ENCODE measurements at regions of chr1 and their contacts with region 1.

Region 1: DNA sequence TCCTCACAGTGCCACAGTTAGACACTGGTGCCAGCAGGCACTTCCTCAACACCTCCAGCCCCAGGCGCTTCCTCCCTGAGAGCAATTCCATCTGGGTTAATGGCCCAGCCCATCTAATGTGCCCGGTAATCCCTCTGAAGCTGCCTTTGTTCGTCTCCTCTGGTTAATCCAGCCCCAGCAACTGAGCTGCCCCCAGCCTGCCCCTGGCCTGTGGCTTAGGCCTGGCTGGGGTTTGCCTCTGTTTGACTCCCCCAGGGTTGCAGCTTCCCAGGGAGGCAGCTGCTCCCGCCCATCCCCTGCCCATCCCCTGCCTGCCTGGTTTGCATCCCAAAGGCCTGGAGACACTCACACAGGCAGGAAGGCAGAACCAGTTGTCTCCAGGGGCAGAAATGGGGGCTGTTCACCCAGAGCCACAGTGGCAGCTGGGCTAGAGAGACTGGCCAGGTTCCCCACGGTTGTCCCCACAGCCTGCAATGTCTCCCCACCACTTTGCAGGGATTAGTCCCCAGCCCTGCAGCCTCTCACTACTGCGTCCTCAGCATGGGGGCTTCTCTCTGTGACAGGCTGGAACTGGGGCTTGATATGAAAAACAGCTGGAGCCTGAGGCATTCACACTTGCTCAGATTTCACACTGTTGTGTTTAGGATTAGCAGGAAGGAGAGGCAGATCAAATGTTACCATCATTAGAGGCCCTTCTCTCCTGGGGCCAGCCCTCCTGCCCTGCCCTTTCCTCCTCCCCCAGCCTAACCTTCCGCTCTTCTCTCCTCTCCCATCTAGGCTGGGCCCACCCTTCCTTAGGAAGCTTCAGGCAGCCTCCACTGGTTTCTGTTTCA is 120.2 kb downstream of the TLR5 start:
- DNase-seq: no peak
- H3K4me3 ChIP-seq: peak overlapping the region in 3 of 4 experiments; percentile 5 to 47 (median 12); a peak in 4 of 8 replicates
- H3K27ac ChIP-seq: peak overlapping the region; percentile 46; the same call in 1 of the 2 replicates
- H3K4me1 ChIP-seq: peaks cover 14 to 42% (median 27%) of the 10 kb centered on the region in 4 experiments
- H3K27me3 ChIP-seq: no peaks in the 10 kb centered on the region
- CTCF ChIP-seq: peak in 1 of 3 experiments; percentile 6; a peak in 1 of 4 replicates
- EP300 ChIP-seq: peak in 1 of 2 experiments; percentile 34; a peak in 1 of 3 replicates
- POLR2A ChIP-seq: peak; percentile 39 to 46; a peak in 2 of 3 replicates
- RAD21 ChIP-seq: no peak

Region 2: DNA sequence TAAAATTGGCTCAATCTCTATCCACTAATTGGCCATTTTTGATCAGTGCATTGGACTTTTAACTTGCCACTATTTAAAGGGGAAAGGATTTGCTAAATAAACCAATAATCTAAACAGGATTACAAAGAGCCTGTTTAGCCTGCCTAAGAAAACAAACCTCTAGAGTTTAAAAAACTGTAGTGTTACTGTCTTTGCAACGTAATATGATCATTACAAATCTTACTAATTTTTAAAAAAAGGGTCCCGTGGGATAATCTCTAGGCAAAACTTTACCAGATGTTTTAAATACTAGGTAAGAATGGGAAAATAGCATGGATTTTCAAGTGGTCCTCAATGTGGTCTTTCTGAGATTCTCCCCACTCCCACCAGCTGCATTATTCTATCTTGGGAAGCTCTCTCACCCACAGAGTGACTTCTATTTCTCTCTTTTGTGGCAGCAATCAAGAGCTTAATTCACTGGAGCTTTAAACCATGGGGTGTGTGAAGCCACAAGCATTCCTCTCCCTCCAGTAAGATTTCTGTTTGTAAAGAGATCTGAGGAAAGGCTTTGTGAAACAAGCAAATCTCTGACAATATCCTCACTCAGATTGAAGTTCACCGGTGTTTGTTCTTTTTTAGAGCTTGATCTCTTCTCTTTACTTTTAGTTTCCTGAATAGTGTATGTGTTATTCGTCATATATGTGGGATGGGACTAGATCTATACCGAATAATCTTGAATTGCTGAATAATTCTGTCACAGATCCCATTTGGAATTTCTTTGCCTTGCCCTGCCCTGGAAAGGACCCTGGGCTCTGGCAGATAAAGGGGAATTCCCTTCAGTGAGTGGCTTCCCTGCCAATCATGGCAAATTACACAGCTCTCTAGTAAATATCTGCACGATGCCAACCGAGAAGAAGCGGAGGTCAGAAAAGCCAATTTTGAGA is 12.0 kb before region 1 on chr1:
- CTCF ChIA-PET with region 1: interaction called, 3 read pairs
- POLR2A ChIA-PET with region 1: interaction called, 53 read pairs
- DNase-seq: no peak
- H3K4me3 ChIP-seq: peak overlapping the region in 2 of 4 experiments; percentile 9 to 22; a peak in 2 of 8 replicates
- H3K27ac ChIP-seq: no peak overlapping the region; the same call in 1 of the 2 replicates
- H3K4me1 ChIP-seq: peaks cover 0 to 5% (median 2%) of the 10 kb centered on the region in 4 experiments; a peak in 4 of 7 replicates
- H3K27me3 ChIP-seq: no peaks in the 10 kb centered on the region
- CTCF ChIP-seq: no peak
- EP300 ChIP-seq: no peak
- POLR2A ChIP-seq: peak in 1 of 2 experiments; percentile 71; a peak in 2 of 3 replicates
- RAD21 ChIP-seq: no peak

Region 3: GRCh38 chr1:223041473-223041872 is 18.6 kb after region 1 on chr1:
- CTCF ChIA-PET with region 1: interaction called, 4 read pairs
- POLR2A ChIA-PET with region 1: interaction called, 53 read pairs
- DNase-seq: no peak
- H3K4me3 ChIP-seq: no peak overlapping the region
- H3K27ac ChIP-seq: no peak overlapping the region
- H3K4me1 ChIP-seq: peaks cover 0 to 7% (median 2%) of the 10 kb centered on the region in 4 experiments; a peak in 4 of 7 replicates
- H3K27me3 ChIP-seq: peaks cover 0 to 2% (median 0%) of the 10 kb centered on the region in 4 experiments; a peak in 1 of 7 replicates
- CTCF ChIP-seq: no peak
- EP300 ChIP-seq: no peak
- POLR2A ChIP-seq: no peak
- RAD21 ChIP-seq: no peak

Region 4: DNA sequence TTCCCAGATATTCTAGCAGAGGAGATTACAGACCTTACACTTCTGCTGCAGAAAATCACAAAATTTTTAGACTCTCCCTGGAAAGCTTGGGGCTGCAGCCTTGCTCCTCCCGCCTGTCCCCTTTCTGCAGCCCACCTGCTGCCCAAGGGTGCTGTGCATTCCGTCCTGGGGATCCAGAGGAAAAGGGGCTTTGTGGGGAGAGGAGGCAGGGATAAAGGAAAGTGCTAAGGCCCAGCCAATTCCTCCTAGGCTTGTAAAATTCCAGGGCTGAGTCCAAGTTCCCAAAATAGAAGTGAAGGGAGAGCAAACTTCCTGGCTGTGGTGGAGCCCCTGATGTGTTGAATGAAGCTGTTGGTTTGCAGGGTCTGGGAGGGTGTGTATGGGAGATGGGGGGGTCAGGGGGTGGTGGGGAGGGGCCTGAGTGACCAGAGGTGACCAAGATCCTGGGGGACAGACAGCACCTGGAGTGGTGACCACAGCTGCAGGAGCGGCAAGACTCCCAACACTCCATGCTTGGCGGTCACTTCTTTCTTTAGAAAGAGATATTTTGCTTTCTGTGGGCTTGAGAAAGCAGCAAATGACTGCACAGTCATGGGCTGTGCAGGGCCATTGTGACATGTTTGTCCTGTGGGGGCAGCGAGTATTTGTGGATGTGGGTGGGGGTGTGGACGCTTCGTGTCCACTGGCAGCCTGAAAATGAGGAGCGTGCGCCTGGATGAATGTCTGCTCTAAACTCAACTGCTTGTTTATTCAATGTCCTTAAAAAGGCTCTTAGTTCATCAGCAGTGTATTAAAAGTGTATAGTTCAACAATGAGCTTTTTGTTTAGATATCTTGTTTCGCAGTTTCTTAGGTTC is 51.8 kb after region 1 on chr1:
- CTCF ChIA-PET with region 1: interaction called, 5 read pairs
- POLR2A ChIA-PET with region 1: interaction called, 43 read pairs
- DNase-seq: no peak
- H3K4me3 ChIP-seq: no peak overlapping the region
- H3K27ac ChIP-seq: no peak overlapping the region
- H3K4me1 ChIP-seq: peaks cover 4 to 11% (median 7%) of the 10 kb centered on the region in 4 experiments
- H3K27me3 ChIP-seq: no peaks in the 10 kb centered on the region
- CTCF ChIP-seq: no peak
- EP300 ChIP-seq: no peak
- POLR2A ChIP-seq: no peak
- RAD21 ChIP-seq: no peak

Region 5: DNA sequence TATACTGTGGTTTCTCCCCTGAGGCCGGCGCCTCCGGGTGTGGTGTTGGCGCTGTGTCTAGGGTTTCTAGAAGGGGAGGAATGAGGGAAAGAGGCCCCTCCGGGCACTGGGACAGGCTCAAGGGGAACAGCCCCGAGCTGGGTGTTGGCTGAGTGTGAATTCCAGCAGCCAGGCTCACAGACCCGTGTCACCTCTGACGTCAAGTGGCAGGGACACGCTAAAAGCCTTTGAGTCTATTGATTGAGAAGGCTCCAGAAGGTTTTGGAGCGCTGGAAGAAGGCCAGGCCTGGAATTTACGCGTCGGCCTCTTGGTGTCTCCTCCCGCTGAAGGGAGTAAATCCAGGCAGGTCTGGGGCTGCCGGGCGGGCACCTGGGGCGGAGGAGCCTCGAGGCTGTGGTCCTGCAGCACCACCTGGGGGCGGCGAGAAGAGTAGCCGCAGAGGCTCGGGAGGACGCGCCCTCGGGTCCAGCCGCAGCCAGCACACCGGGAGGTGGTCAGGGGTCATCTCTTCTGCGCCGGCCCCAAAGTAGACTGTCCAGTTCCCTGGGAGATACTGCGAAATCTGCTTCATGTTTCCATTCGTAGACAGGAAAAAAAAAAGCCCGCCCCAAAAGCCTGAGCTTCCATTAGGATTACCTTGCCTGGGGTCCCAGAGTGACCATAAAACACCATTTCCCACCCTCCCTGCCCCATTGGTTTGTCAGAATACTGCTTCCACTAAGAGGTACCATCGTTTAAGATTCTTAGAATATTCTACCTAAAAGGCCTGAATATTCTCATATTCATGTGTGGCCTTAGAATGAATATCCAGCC is 58.5 kb after region 1 on chr1:
- CTCF ChIA-PET with region 1: interaction called, 7 read pairs
- POLR2A ChIA-PET with region 1: interaction called, 43 read pairs
- DNase-seq: peak; percentile 89 to 90
- H3K4me3 ChIP-seq: no peak overlapping the region
- H3K27ac ChIP-seq: no peak overlapping the region
- H3K4me1 ChIP-seq: peaks cover 0 to 2% (median under 1%) of the 10 kb centered on the region in 4 experiments; a peak in 1 of 7 replicates
- H3K27me3 ChIP-seq: peaks cover 0 to 5% (median 0%) of the 10 kb centered on the region in 4 experiments; a peak in 1 of 7 replicates
- CTCF ChIP-seq: peak; percentile 88 to 97 (median 89)
- EP300 ChIP-seq: no peak
- POLR2A ChIP-seq: no peak
- RAD21 ChIP-seq: peak; percentile 99

Region 6: DNA sequence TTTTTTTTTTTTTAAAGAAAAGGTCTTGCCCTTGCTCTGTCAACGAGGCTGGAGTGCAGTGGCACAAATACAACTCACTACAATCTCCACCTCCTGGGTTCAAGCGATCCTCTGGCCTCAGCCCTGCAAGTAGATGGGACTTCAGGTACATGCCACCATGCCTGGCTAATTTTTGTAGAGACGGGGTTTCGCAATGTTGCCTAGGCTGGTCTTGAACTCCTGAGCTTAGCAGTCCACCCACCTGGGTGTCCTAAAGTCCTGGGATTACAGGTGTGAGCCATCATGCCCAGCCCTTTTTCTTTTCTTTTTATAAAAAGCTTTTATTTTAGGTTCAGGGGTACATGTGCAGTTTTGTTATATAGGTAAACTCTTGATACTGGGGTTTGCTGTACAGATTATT is 73.0 kb after region 1 on chr1:
- CTCF ChIA-PET with region 1: no interaction called
- POLR2A ChIA-PET with region 1: no interaction called
- DNase-seq: no peak
- H3K4me3 ChIP-seq: no peak overlapping the region
- H3K27ac ChIP-seq: no peak overlapping the region
- H3K4me1 ChIP-seq: no peaks in the 10 kb centered on the region
- H3K27me3 ChIP-seq: no peaks in the 10 kb centered on the region
- CTCF ChIP-seq: no peak
- EP300 ChIP-seq: no peak
- POLR2A ChIP-seq: no peak
- RAD21 ChIP-seq: no peak

Measured in H1 (cell line).